Heart right ventricle (tissue), 16 donors: ENCODE measurements at regions of chr10 and their contacts with region 1.

Region 1: GRCh38 chr10:89391917-89392756 is at the start of gene IFIT1:
- DNase-seq: peak in 1 of 2 donors; percentile 86
- ATAC-seq: peak; percentile 92 to 97 (median 96)
- H3K4me3 ChIP-seq: peak within 1 kb of the TSS; percentile 19 to 78 (median 62)
- H3K27ac ChIP-seq: peak within 1 kb of the TSS; percentile 55 to 97 (median 88)
- H3K4me1 ChIP-seq: peaks cover 0 to 61% (median 42%) of the 10 kb centered on the region in 9 donors
- H3K27me3 ChIP-seq: no peaks in the 10 kb centered on the region
- CTCF ChIP-seq: no peak
- total RNA-seq, gene IFIT1: 18.8 to 50.1 (median 30.1) TPM

Region 2: DNA sequence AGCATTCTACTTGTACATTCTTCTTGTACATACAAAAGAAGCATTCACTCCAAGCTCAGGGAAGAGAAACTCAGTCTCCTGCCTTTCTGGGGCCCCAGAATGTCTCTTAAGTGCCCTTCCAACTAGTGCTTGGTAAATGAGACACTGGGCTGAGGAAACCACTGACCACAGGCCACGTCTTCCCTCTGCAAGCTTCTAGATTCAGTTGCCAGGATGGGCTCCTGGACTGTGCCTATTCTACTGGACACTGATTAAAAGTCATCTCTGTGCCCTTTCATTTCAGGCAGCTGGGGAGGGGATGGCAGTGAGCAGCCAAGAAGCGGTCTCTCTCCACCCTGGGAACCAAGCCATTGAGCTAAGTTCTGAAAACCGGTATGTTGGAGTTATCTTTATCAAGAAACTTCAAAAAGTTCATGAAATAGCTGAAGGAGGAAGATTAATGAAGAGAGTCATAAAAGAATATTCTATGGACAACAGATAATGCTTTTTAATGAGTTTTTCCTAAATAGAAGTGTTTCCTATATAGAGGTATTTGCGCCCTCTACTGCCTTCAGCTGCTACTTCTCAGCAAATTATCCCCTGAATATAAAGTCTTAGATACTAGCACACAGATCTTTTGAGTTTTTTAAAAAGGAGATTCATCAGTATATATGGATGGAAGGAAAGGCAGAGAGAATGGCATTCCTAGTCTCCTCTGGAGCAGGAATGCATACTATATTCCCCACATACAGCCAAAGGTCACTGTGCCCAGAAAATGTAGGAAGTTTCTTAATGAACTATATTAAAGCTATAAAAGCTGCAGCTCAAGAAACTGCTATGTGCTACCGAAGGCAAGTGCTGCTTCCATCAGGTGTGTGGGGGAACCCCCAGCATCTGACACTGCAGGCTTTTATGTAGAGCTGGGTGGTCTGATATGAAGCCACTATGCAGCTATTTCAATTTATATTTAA is 22.7 kb before region 1 on chr10:
- intact Hi-C with region 1: loop called in 1 of 10 experiments (anchors 2 kb)
- DNase-seq: no peak
- ATAC-seq: peak in 4 of 8 donors; percentile 11 to 36 (median 28)
- H3K4me3 ChIP-seq: no peak overlapping the region
- H3K27ac ChIP-seq: peak overlapping the region in 4 of 10 donors; percentile 29 to 57 (median 42)
- H3K4me1 ChIP-seq: peaks cover 10 to 43% (median 26%) of the 10 kb centered on the region in 9 donors
- H3K27me3 ChIP-seq: no peaks in the 10 kb centered on the region
- CTCF ChIP-seq: peak in 8 of 9 donors; percentile 36 to 68 (median 60)